ENCODE measurements at regions of chr13 and their contacts with region 1.

Region 1: GRCh38 chr13:51286135-51287002 is 53.1 kb upstream of the SERPINE3 start:
- DNase-seq: no peak
- H3K4me3 ChIP-seq: no peak overlapping the region
- CTCF ChIP-seq: peak; percentile 95

Region 2: DNA sequence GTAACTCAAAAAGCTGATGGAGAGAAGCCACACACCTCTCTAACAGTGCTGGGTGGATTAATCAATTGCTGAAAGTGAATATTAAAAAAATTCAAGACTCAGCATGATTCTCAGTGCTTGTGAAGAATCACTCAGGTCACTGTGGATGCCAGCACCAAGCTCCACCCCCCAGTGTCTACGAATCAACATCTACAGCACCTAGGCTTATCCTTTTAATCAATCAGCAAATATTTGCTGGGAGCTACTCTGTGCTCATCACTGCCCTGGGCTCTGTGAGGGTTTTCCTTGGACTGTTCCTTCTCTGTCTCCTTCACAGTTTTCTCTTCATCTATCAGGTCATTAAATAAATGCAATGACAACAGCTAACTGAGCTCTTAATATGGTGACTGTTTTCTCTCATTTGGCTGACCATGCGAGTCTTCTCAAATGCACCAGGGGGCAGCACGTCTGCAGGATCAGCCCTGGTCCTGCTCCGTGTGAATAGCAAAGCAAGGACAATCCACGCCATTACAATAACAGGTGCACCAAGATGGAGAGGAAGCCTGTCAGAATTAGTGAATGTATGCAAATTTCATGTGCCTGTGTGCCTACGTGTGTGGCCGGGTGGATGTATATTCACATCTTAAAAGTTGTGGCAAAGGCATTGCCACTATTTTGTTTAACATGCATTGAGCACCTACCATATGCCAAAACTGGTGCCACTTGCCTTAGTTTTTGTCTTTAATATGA is 160.7 kb before region 1 on chr13:
- CTCF ChIA-PET with region 1: interaction called, 153 read pairs
- POLR2A ChIA-PET with region 1: no interaction called
- DNase-seq: no peak
- H3K4me3 ChIP-seq: no peak overlapping the region
- CTCF ChIP-seq: peak; percentile 84

Region 3: DNA sequence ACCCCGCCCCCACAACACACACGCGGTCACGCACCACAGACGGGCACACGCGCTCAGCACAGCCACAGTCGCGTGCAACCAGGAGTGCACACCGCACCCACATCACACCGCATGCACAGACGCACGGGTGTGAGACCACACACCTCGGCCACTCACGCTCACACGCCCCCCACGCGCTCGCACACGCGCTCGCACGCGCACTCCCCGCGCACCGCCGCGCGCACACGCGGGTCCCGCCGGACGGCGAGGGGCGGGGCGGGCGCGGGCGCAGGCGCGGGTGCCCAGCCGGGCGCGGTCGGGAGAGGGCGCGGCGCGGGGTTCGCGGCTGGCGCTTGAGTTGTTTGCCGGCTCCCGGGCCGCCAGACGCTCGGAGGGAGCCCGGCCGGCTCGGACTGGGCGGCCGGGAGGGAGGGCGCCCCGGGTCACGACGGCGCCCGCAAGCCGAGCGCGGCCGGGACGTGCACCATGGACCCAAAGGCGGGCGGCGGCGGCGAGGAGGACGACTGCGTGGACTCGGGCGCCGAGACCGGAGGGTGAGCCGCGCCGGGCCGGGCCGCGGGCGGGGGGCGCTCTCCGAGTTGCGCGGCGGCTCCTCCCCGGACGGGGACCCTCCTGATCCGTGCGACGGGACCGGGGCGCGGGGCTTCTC is 64.2 kb before region 1 on chr13 and contains the start of gene FAM124A:
- CTCF ChIA-PET with region 1: interaction called, 11 read pairs
- POLR2A ChIA-PET with region 1: no interaction called
- DNase-seq: no peak
- H3K4me3 ChIP-seq: peak within 1 kb of the TSS; percentile 63
- CTCF ChIP-seq: peak; percentile 11

Region 4: GRCh38 chr13:51262501-51263211 is 23.7 kb before region 1 on chr13:
- CTCF ChIA-PET with region 1: interaction called, 29 read pairs
- POLR2A ChIA-PET with region 1: no interaction called
- DNase-seq: no peak
- H3K4me3 ChIP-seq: no peak overlapping the region
- CTCF ChIP-seq: no peak

Region 5: GRCh38 chr13:51297556-51297955 is 11.2 kb after region 1 on chr13:
- CTCF ChIA-PET with region 1: interaction called, 77 read pairs
- POLR2A ChIA-PET with region 1: no interaction called
- DNase-seq: no peak
- H3K4me3 ChIP-seq: no peak overlapping the region
- CTCF ChIP-seq: no peak

Region 6: DNA sequence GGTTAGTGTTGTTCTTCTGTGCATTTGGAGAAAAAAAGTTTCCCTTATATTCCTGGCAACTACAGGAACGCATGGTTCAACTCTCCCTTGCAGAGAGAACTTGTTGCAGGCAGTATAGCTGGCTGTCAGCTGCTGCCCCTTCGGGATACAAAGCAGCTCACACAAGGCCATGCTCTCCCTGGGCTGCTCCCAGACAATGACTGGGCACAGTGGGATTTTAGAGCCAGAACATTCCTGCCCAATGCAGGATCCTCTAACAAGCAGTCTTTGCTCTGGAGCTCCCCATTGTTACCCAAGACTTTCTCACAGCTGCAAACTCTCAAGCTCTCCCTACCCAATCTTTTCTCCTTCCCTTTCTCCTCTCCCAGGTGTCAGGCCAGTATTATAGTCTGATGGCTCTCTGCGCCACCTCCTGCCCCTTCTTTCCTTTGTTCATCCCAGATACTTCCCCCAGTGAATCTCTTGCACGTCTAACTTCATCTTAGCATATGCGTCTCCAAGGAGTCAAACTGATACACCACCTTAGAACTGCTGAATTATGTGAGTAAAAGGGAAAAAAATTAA is 25.7 kb after region 1 on chr13:
- CTCF ChIA-PET with region 1: interaction called, 36 read pairs
- POLR2A ChIA-PET with region 1: no interaction called
- DNase-seq: no peak
- H3K4me3 ChIP-seq: no peak overlapping the region
- CTCF ChIP-seq: no peak